ENCODE measurements at regions of chr3 and their contacts with region 1.

Region 1: GRCh38 chr3:53709860-53710674 is 136.2 kb downstream of the CHDH start:
- DNase-seq: peak; percentile 91

Region 2: GRCh38 chr3:53293867-53294266 is 416.2 kb before region 1 on chr3:
- intact Hi-C with region 1: loop called (anchors 10 kb)
- DNase-seq: no peak

Region 3: GRCh38 chr3:53416530-53416929 is 293.5 kb before region 1 on chr3:
- intact Hi-C with region 1: no loop called
- DNase-seq: no peak